CD8-positive, alpha-beta T cell (primary cell): ENCODE measurements at regions of chr9 and their contacts with region 1.

Region 1: DNA sequence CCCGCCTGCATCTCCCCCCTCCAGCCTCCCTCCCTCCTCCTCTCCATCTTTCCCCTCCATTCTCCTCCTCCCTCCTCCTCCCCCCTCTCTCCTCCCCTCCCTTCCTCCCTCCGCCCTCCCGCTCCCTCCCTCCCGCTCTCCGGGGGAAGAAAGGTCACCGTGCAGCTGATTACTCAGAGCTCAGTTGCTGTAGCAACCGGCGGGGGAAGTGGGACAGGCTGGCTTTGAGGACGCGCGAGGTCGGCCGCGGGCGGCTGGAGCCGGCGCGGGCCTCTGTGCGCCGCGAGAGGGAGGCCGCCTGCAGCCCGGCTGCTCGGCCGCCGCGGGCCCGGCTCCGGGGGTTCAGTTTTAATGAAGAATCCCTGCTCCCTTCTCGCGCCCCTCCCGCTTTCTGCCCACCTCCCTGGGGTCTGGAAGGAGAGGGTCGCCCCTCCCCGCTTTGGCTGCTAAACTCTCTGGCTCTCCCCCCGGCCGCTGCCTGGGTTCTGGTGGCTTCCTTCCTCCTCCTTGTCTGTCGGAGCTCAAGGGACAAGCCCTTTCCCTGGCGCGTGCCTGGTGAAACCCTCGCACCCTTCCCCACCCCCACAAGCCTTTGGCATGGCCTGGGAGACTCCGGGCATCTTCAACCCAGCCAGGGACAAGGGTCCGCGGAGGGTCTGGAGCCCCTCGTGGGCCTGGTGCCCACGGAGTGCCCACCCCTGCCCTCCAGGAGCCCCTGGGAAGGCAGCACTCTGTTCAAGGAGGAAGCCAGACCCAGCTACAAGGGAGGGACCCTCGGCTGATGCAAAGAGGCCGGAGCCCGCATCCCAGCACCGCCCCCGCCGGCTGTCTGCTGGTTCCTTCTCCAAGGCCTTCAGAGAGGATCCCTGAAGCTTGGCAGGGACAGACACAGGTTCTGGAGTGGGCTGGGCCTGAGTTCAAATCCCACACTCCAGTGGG is 160.3 kb downstream of the C9orf50 start:
- DNase-seq: peak; percentile 75 to 95 (median 88)
- ATAC-seq: peak; percentile 68
- H3K4me3 ChIP-seq: peak overlapping the region; percentile 24 to 46
- H3K4me3 Mint-ChIP-seq: peak overlapping the region; percentile 78
- H3K27ac ChIP-seq: peak overlapping the region; percentile 56 to 85
- H3K27ac Mint-ChIP-seq: peak overlapping the region; percentile 90
- H3K4me1 ChIP-seq: peaks cover 38% of the 10 kb centered on the region
- H3K4me1 Mint-ChIP-seq: peaks cover 45% of the 10 kb centered on the region
- H3K27me3 ChIP-seq: no peaks in the 10 kb centered on the region
- H3K27me3 Mint-ChIP-seq: no peaks in the 10 kb centered on the region
- CTCF ChIP-seq: no peak

Region 2: GRCh38 chr9:128986671-128987070 is 473.9 kb before region 1 on chr9:
- CTCF ChIA-PET with region 1: no interaction called
- POLR2A ChIA-PET with region 1: no interaction called
- intact Hi-C with region 1: no loop called
- DNase-seq: no peak
- ATAC-seq: no peak
- H3K4me3 ChIP-seq: no peak overlapping the region
- H3K4me3 Mint-ChIP-seq: no peak overlapping the region
- H3K27ac ChIP-seq: no peak overlapping the region
- H3K27ac Mint-ChIP-seq: no peak overlapping the region
- H3K4me1 ChIP-seq: no peaks in the 10 kb centered on the region
- H3K4me1 Mint-ChIP-seq: no peaks in the 10 kb centered on the region
- H3K27me3 ChIP-seq: no peaks in the 10 kb centered on the region
- H3K27me3 Mint-ChIP-seq: no peaks in the 10 kb centered on the region
- CTCF ChIP-seq: no peak

Region 3: DNA sequence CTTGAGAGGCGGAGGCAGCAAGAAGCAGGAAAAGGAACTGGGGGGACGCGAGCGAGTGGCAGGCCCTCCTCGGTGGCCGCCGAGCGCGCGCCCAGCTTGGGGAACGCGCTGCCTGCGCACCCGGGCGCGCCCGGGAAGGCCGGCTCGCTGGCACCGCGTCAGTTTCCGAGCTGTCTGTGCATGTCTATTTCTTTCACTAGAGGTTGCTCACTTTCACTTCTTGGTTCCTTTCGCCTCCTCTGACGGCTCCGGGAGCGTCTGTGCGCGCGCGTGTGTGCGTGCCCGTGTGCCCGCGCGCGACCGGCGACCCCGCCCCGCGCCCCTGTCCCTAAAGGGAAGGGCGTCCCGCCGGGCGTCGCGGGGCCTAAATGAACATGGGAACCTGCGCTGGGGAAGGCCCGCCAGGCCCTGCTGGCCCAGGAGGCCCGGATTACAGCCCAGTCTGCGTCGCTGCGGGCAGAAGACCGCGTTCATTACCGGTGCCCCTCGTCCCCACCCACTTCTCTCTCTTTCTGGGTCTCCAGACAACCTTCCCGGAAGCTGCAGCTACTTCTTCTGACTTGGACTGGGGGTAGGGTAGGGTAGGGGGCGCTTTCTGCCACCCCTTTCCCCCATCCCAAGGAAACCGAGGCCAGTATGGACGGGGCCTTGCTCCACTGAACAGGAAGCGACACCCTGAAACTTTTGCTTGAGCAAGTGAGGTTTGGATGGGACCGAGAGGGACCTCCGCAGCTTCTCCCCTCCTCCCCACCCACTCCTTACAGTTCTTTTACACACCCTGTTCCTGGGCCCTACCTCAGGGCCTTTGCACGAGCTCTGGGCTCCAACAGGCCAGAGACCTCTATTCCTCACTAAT is 76.8 kb before region 1 on chr9:
- CTCF ChIA-PET with region 1: no interaction called
- POLR2A ChIA-PET with region 1: interaction called, 3 read pairs
- intact Hi-C with region 1: loop called in 1 of 2 experiments (anchors 2 kb)
- DNase-seq: peak; percentile 46 to 90 (median 77)
- ATAC-seq: peak; percentile 90
- H3K4me3 ChIP-seq: peak overlapping the region; percentile 46 to 64
- H3K4me3 Mint-ChIP-seq: peak overlapping the region; percentile 84
- H3K27ac ChIP-seq: peak overlapping the region; percentile 77 to 90
- H3K27ac Mint-ChIP-seq: peak overlapping the region; percentile 94
- H3K4me1 ChIP-seq: peaks cover 18% of the 10 kb centered on the region
- H3K4me1 Mint-ChIP-seq: peaks cover 15% of the 10 kb centered on the region
- H3K27me3 ChIP-seq: no peaks in the 10 kb centered on the region
- H3K27me3 Mint-ChIP-seq: no peaks in the 10 kb centered on the region
- CTCF ChIP-seq: peak; percentile 27

Region 4: GRCh38 chr9:129487642-129488409 is 27.2 kb after region 1 on chr9:
- CTCF ChIA-PET with region 1: no interaction called
- POLR2A ChIA-PET with region 1: interaction called, 7 read pairs
- intact Hi-C with region 1: loop called (anchors 1 kb)
- DNase-seq: peak in 3 of 9 experiments; percentile 64 to 80 (median 64)
- ATAC-seq: peak; percentile 14
- H3K4me3 ChIP-seq: peak overlapping the region; percentile 55 to 58
- H3K4me3 Mint-ChIP-seq: peak overlapping the region; percentile 80
- H3K27ac ChIP-seq: peak overlapping the region; percentile 72 to 83
- H3K27ac Mint-ChIP-seq: peak overlapping the region; percentile 92
- H3K4me1 ChIP-seq: peaks cover 56% of the 10 kb centered on the region
- H3K4me1 Mint-ChIP-seq: peaks cover 42% of the 10 kb centered on the region
- H3K27me3 ChIP-seq: no peaks in the 10 kb centered on the region
- H3K27me3 Mint-ChIP-seq: no peaks in the 10 kb centered on the region
- CTCF ChIP-seq: no peak

Region 5: DNA sequence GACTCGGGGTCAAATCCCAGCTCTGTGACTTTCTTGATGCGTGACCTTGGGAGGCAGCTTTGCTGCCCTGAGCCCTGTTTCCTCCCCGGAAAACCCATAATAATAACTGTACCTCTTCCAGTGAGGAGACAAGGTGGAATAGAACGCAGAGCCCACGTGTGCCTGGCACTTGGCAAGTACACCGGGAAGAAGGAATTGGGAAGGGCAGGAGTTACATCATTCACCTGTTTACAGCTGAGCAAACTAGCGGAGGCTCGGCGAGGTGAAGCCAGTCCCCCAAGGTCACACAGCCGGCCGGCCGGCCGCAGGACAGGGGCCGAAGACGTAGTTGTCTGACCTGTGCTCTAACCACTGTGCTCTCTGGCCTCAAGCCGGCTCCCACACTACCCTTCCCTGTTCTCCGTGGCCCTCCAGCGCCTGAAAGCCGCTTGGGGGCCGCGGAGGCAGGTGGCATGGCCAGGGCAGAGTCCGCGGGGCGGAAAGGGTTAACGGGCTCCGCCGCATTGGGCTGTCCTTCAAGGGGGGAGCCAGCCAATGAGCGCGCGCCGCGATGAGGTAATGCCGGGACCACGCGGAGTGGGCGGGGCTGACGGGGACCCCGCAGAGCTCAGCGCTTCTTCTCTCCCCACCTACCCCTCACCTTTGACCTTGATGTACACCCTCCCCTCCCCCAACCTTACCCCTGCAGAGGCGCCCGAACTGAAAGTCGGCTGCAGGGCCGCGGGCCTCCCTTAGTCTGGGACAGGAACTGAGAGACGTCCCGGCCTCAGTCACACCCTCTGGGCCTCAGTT is 35.1 kb after region 1 on chr9:
- CTCF ChIA-PET with region 1: interaction called, 3 read pairs
- POLR2A ChIA-PET with region 1: interaction called, 6 read pairs
- intact Hi-C with region 1: loop called in 1 of 2 experiments (anchors 2 kb)
- DNase-seq: peak; percentile 66 to 89 (median 82)
- ATAC-seq: peak; percentile 89
- H3K4me3 ChIP-seq: peak overlapping the region; percentile 75 to 77
- H3K4me3 Mint-ChIP-seq: peak overlapping the region; percentile 82
- H3K27ac ChIP-seq: peak overlapping the region in 1 of 2 experiments; percentile 38
- H3K27ac Mint-ChIP-seq: peak overlapping the region; percentile 37
- H3K4me1 ChIP-seq: peaks cover 25% of the 10 kb centered on the region
- H3K4me1 Mint-ChIP-seq: peaks cover 25% of the 10 kb centered on the region
- H3K27me3 ChIP-seq: no peaks in the 10 kb centered on the region
- H3K27me3 Mint-ChIP-seq: no peaks in the 10 kb centered on the region
- CTCF ChIP-seq: no peak

Region 6: GRCh38 chr9:129524582-129525270 is 64.1 kb after region 1 on chr9:
- CTCF ChIA-PET with region 1: no interaction called
- POLR2A ChIA-PET with region 1: no interaction called
- intact Hi-C with region 1: no loop called
- DNase-seq: no peak
- ATAC-seq: no peak
- H3K4me3 ChIP-seq: no peak overlapping the region
- H3K4me3 Mint-ChIP-seq: no peak overlapping the region
- H3K27ac ChIP-seq: no peak overlapping the region
- H3K27ac Mint-ChIP-seq: no peak overlapping the region
- H3K4me1 ChIP-seq: no peaks in the 10 kb centered on the region
- H3K4me1 Mint-ChIP-seq: no peaks in the 10 kb centered on the region
- H3K27me3 ChIP-seq: no peaks in the 10 kb centered on the region
- H3K27me3 Mint-ChIP-seq: peaks cover 12% of the 10 kb centered on the region
- CTCF ChIP-seq: no peak

Region 7: GRCh38 chr9:129550199-129550839 is 89.7 kb after region 1 on chr9:
- CTCF ChIA-PET with region 1: no interaction called
- POLR2A ChIA-PET with region 1: no interaction called
- intact Hi-C with region 1: loop called in 1 of 2 experiments (anchors 5 kb)
- DNase-seq: peak in 3 of 9 experiments; percentile 28 to 42 (median 34)
- ATAC-seq: peak; percentile 20
- H3K4me3 ChIP-seq: peak overlapping the region in 1 of 2 experiments; percentile 8
- H3K4me3 Mint-ChIP-seq: peak overlapping the region; percentile 66
- H3K27ac ChIP-seq: no peak overlapping the region
- H3K27ac Mint-ChIP-seq: no peak overlapping the region
- H3K4me1 ChIP-seq: no peaks in the 10 kb centered on the region
- H3K4me1 Mint-ChIP-seq: peaks cover 7% of the 10 kb centered on the region
- H3K27me3 ChIP-seq: peaks cover 7 to 15% of the 10 kb centered on the region in 2 experiments
- H3K27me3 Mint-ChIP-seq: peaks cover 27% of the 10 kb centered on the region
- CTCF ChIP-seq: no peak